CD8-positive, alpha-beta T cell (primary cell): ENCODE measurements at regions of chr5 and their contacts with region 1.

Region 1: GRCh38 chr5:14581333-14581890 is at the start of gene OTULINL:
- DNase-seq: peak; percentile 76 to 94 (median 90)
- ATAC-seq: peak; percentile 88
- H3K4me3 ChIP-seq: peak within 1 kb of the TSS; percentile 69 to 82
- H3K4me3 Mint-ChIP-seq: peak within 1 kb of the TSS; percentile 88
- H3K27ac ChIP-seq: peak within 1 kb of the TSS; percentile 75 to 82
- H3K27ac Mint-ChIP-seq: peak within 1 kb of the TSS; percentile 94
- H3K4me1 ChIP-seq: peaks cover 37% of the 10 kb centered on the region
- H3K4me1 Mint-ChIP-seq: peaks cover 43% of the 10 kb centered on the region
- H3K27me3 ChIP-seq: no peaks in the 10 kb centered on the region
- H3K27me3 Mint-ChIP-seq: no peaks in the 10 kb centered on the region
- CTCF ChIP-seq: no peak
- total RNA-seq, gene OTULINL: 91.8 to 93.1 TPM

Region 2: DNA sequence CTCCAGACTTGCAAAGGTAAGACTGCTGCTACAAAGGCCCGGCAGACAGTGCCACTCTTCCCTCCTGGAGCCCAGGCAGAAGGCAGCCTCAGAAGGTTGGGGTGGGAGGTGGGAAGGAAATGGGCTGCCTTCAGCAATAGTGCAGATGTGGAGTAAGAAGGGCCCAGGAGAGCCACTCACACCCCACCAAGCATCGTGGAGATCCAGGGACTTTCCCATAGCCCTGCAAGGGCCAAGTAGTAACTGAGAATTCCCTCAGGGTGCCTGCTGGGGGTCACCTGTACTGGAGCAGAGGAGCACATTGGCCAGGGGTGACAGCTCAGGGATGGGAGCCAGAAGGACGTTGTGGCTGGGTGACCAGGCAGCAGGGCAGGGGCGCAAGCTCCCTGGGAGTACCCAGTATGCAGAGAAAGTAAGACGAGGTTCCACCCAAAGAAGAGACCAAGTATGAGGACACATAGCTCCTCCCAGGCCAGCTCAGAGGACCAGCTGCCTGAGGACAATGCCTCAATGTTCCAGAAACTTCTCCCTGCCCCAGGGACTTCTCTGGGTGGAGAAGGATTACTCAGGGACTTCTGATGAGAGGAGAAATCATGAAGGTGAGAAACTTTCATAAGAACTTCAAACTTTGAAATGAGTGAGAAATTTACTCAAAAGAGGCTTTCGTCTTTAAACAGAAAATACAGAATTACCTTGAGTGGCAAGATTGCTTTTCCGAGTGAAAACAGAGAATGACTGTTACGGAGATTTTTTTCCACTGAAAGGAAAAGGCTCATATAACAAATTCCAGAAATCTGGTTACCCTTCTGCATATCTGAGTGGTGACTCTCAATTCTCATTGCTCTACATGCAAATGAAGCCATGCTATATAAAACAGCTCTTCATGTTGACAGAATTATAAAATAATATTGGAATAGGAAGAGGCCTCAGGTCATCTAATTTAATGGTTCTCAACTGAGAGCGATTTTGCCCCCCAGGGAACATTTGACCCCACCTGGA is 526.1 kb before region 1 on chr5:
- CTCF ChIA-PET with region 1: no interaction called
- POLR2A ChIA-PET with region 1: no interaction called
- intact Hi-C with region 1: no loop called
- DNase-seq: no peak
- ATAC-seq: no peak
- H3K4me3 ChIP-seq: no peak overlapping the region
- H3K4me3 Mint-ChIP-seq: no peak overlapping the region
- H3K27ac ChIP-seq: no peak overlapping the region
- H3K27ac Mint-ChIP-seq: no peak overlapping the region
- H3K4me1 ChIP-seq: no peaks in the 10 kb centered on the region
- H3K4me1 Mint-ChIP-seq: no peaks in the 10 kb centered on the region
- H3K27me3 ChIP-seq: no peaks in the 10 kb centered on the region
- H3K27me3 Mint-ChIP-seq: no peaks in the 10 kb centered on the region
- CTCF ChIP-seq: no peak

Region 3: GRCh38 chr5:14399054-14399692 is 182.2 kb before region 1 on chr5:
- CTCF ChIA-PET with region 1: interaction called, 8 read pairs
- POLR2A ChIA-PET with region 1: interaction called, 3 read pairs
- intact Hi-C with region 1: loop called (anchors 1 to 5 kb)
- DNase-seq: peak in 3 of 9 experiments; percentile 37 to 72 (median 58)
- ATAC-seq: peak; percentile 65
- H3K4me3 ChIP-seq: no peak overlapping the region
- H3K4me3 Mint-ChIP-seq: no peak overlapping the region
- H3K27ac ChIP-seq: no peak overlapping the region
- H3K27ac Mint-ChIP-seq: no peak overlapping the region
- H3K4me1 ChIP-seq: no peaks in the 10 kb centered on the region
- H3K4me1 Mint-ChIP-seq: peaks cover 13% of the 10 kb centered on the region
- H3K27me3 ChIP-seq: no peaks in the 10 kb centered on the region
- H3K27me3 Mint-ChIP-seq: no peaks in the 10 kb centered on the region
- CTCF ChIP-seq: peak; percentile 71

Region 4: GRCh38 chr5:14439087-14439871 is 142.1 kb before region 1 on chr5:
- CTCF ChIA-PET with region 1: no interaction called
- POLR2A ChIA-PET with region 1: no interaction called
- intact Hi-C with region 1: no loop called
- DNase-seq: no peak
- ATAC-seq: no peak
- H3K4me3 ChIP-seq: no peak overlapping the region
- H3K4me3 Mint-ChIP-seq: no peak overlapping the region
- H3K27ac ChIP-seq: no peak overlapping the region
- H3K27ac Mint-ChIP-seq: no peak overlapping the region
- H3K4me1 ChIP-seq: no peaks in the 10 kb centered on the region
- H3K4me1 Mint-ChIP-seq: peaks cover 7% of the 10 kb centered on the region
- H3K27me3 ChIP-seq: no peaks in the 10 kb centered on the region
- H3K27me3 Mint-ChIP-seq: no peaks in the 10 kb centered on the region
- CTCF ChIP-seq: no peak

Region 5: DNA sequence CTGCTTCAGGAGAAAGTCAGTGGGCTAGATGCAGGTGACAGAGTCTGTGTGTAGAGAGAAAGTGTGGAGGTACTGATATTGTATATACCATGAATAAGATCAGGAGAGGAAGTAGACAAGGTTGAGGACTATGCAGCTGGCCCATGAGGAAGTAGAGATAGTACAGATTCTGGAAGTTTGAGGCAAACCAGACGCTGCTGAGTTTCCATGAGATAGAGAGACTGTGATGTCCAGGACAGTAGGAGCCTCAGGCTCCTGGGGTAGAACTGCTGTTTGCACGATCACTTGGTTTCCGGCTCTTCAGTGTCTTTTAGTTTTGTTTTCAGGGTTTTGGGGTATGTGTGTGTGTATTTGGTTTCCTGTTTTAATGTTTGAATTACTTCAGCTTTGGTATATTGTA is 13.8 kb after region 1 on chr5:
- CTCF ChIA-PET with region 1: interaction called, 30 read pairs
- POLR2A ChIA-PET with region 1: interaction called, 64 read pairs
- intact Hi-C with region 1: loop called in 1 of 2 experiments (anchors 1 kb)
- DNase-seq: peak in 7 of 9 experiments; percentile 28 to 79 (median 39)
- ATAC-seq: peak; percentile 75
- H3K4me3 ChIP-seq: peak overlapping the region; percentile 16 to 46
- H3K4me3 Mint-ChIP-seq: peak overlapping the region; percentile 75
- H3K27ac ChIP-seq: peak overlapping the region; percentile 52 to 86
- H3K27ac Mint-ChIP-seq: peak overlapping the region; percentile 93
- H3K4me1 ChIP-seq: peaks cover 82% of the 10 kb centered on the region
- H3K4me1 Mint-ChIP-seq: peaks cover 92% of the 10 kb centered on the region
- H3K27me3 ChIP-seq: no peaks in the 10 kb centered on the region
- H3K27me3 Mint-ChIP-seq: no peaks in the 10 kb centered on the region
- CTCF ChIP-seq: no peak

Region 6: DNA sequence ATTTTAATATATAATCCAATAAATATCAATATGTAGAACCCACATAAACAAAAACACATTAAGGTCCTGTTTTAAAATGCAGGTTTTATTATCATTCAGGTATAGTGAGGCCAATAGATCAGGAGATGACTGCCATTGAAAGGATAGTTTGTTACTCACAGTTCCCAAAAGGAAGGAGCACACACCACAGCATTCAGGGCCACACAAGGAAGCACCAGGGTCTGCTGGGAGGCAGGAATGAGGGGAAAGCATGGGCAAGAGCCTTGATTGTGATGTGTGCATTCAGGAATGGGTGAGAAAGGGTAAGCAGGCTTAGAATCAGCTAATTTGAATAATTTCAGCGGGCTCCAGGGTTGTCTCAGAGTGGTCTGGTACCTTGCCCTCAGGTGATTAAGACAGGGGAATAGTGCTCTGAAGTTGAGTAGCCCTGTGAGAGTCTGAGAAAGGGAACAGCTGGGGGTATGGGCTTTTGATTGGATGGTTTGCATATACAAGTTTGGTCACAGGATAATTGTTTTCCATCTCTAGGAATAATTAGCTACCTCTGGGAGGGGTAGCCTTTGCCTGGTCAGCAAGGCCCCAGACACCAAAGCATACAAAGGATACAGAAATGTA is 63.3 kb after region 1 on chr5:
- CTCF ChIA-PET with region 1: interaction called, 13 read pairs
- POLR2A ChIA-PET with region 1: interaction called, 6 read pairs
- intact Hi-C with region 1: no loop called
- DNase-seq: no peak
- ATAC-seq: no peak
- H3K4me3 ChIP-seq: no peak overlapping the region
- H3K4me3 Mint-ChIP-seq: no peak overlapping the region
- H3K27ac ChIP-seq: no peak overlapping the region
- H3K27ac Mint-ChIP-seq: no peak overlapping the region
- H3K4me1 ChIP-seq: peaks cover 4% of the 10 kb centered on the region
- H3K4me1 Mint-ChIP-seq: no peaks in the 10 kb centered on the region
- H3K27me3 ChIP-seq: no peaks in the 10 kb centered on the region
- H3K27me3 Mint-ChIP-seq: peaks cover 11% of the 10 kb centered on the region
- CTCF ChIP-seq: no peak

Region 7: GRCh38 chr5:14706615-14707021 is 125.2 kb after region 1 on chr5:
- CTCF ChIA-PET with region 1: no interaction called
- POLR2A ChIA-PET with region 1: interaction called, 4 read pairs
- intact Hi-C with region 1: loop called (anchors 5 kb)
- DNase-seq: peak in 8 of 9 experiments; percentile 33 to 83 (median 60)
- ATAC-seq: peak; percentile 94
- H3K4me3 ChIP-seq: no peak overlapping the region
- H3K4me3 Mint-ChIP-seq: peak overlapping the region; percentile 76
- H3K27ac ChIP-seq: peak overlapping the region; percentile 46 to 72
- H3K27ac Mint-ChIP-seq: peak overlapping the region; percentile 99
- H3K4me1 ChIP-seq: peaks cover 79% of the 10 kb centered on the region
- H3K4me1 Mint-ChIP-seq: peaks cover 80% of the 10 kb centered on the region
- H3K27me3 ChIP-seq: no peaks in the 10 kb centered on the region
- H3K27me3 Mint-ChIP-seq: no peaks in the 10 kb centered on the region
- CTCF ChIP-seq: no peak

Region 8: DNA sequence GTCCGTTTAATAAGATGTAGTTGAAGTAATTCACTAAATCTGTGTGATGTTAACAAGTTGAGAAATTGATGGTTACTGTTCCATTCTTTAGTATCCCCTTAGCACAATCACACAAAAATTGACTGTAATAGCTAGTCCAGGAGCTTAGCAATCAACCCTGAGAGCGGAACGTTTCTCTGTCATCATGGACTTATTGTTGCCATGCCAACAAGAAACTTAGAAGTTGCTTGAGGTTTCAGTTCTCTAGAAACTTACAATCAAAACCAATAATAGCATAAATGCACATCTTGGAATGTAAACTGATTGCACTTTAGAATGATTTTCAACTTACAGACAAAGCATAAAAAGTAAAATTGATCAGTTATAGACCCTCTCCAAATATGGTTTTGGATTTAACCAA is 415.6 kb after region 1 on chr5:
- CTCF ChIA-PET with region 1: no interaction called
- POLR2A ChIA-PET with region 1: interaction called, 3 read pairs
- intact Hi-C with region 1: loop called in 1 of 2 experiments (anchors 5 kb)
- DNase-seq: peak in 1 of 9 experiments; percentile 35
- ATAC-seq: no peak
- H3K4me3 ChIP-seq: no peak overlapping the region
- H3K4me3 Mint-ChIP-seq: no peak overlapping the region
- H3K27ac ChIP-seq: no peak overlapping the region
- H3K27ac Mint-ChIP-seq: no peak overlapping the region
- H3K4me1 ChIP-seq: peaks cover 4% of the 10 kb centered on the region
- H3K4me1 Mint-ChIP-seq: peaks cover 14% of the 10 kb centered on the region
- H3K27me3 ChIP-seq: no peaks in the 10 kb centered on the region
- H3K27me3 Mint-ChIP-seq: no peaks in the 10 kb centered on the region
- CTCF ChIP-seq: no peak